ENCODE measurements at regions of chr2 and their contacts with region 1.

Region 1: GRCh38 chr2:119119999-119120756 is 38.4 kb downstream of the C1QL2 start:
- DNase-seq: no peak
- H3K4me3 ChIP-seq: no peak overlapping the region
- CTCF ChIP-seq: no peak

Region 2: GRCh38 chr2:118940486-118941205 is 179.5 kb before region 1 on chr2:
- in situ Hi-C with region 1: no loop called
- DNase-seq: no peak
- H3K4me3 ChIP-seq: no peak overlapping the region
- CTCF ChIP-seq: no peak

Region 3: DNA sequence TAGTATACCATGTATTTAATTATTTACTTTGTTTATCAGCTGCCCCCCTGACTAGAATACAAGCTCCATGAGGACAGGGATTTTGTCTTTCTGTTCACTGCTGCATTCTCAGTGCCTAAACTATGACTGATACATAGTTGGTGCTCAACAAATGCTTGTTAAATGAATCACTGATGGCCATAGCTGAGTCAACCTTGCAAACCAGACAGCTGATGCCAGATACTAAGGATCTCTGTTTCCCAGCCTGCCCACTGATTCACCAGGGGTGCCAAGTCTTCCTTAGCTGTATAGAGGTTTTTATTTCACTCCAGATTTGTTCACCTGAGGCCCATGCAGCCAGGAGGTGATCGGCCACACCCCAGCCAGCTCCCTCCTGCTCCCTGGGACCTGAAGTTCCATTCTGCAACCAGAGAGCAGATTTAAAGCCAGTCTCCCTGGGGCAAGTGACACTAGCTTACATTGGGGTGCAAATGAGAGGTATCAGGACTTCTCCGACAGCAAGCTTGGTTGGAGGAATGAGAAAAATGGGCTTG is 53.8 kb before region 1 on chr2:
- in situ Hi-C with region 1: loop called (anchors 5 kb)
- DNase-seq: no peak
- H3K4me3 ChIP-seq: no peak overlapping the region
- CTCF ChIP-seq: no peak

Region 4: GRCh38 chr2:119085613-119086012 is 34.6 kb before region 1 on chr2:
- in situ Hi-C with region 1: no loop called
- DNase-seq: no peak
- H3K4me3 ChIP-seq: no peak overlapping the region
- CTCF ChIP-seq: no peak

Measured in astrocyte of the cerebellum (primary cell).